Colonic mucosa (tissue), 4 donors: ENCODE measurements at regions of chr18 and their contacts with region 1.

Region 1: DNA sequence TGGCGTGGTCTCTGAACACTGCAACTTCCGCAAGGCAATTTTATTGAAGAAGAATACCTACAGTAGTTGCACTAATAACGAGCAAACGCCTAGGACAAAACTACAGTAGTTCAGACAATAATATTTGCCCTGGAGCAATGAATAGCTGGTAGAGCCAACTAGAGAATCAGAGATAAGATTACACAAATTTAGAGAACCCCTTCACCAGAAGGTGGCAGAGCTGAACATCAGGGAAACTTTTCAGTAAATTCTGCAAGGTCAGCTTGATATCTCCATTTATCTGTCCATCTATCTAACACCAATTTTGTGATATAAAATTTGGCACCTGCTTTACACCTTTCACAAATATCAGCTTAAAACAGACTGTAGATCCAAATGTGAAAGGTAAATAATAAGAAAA is 43.8 kb downstream of the CDH19 start:
- DNase-seq: peak; percentile 20
- H3K4me3 ChIP-seq: no peak overlapping the region
- H3K27ac ChIP-seq: no peak overlapping the region
- H3K4me1 ChIP-seq: no peaks in the 10 kb centered on the region
- H3K27me3 ChIP-seq: no peaks in the 10 kb centered on the region
- CTCF ChIP-seq: peak; percentile 35

Region 2: DNA sequence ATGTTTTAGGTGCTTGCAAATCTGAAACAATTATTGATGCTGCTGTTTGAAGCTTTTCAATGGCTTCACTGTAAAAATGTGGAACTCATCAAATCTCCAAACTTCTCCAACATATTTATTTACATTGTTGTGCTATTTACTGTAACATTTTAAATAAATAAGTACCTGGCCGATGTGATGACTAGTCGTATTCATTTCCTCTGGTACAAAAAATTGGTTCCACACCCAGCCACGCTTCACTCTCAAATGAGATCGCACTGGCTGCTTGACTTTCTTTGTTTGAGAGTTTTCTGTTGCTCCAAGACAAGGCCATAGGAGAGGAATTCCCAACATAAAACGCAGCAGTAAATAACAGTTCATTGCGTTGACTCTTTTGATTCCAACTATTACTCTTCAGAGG is 11.8 kb after region 1 on chr18:
- intact Hi-C with region 1: no loop called
- DNase-seq: no peak
- H3K4me3 ChIP-seq: no peak overlapping the region
- H3K27ac ChIP-seq: no peak overlapping the region
- H3K4me1 ChIP-seq: no peaks in the 10 kb centered on the region
- H3K27me3 ChIP-seq: no peaks in the 10 kb centered on the region
- CTCF ChIP-seq: no peak

Region 3: GRCh38 chr18:66749475-66750035 is 189.5 kb after region 1 on chr18:
- intact Hi-C with region 1: loop called (anchors 5 kb)
- DNase-seq: no peak
- H3K4me3 ChIP-seq: no peak overlapping the region
- H3K27ac ChIP-seq: no peak overlapping the region
- H3K4me1 ChIP-seq: no peaks in the 10 kb centered on the region
- H3K27me3 ChIP-seq: no peaks in the 10 kb centered on the region
- CTCF ChIP-seq: no peak